ENCODE measurements at regions of chr12 and their contacts with region 1.

Region 1: GRCh38 chr12:46382964-46383653 is 10.5 kb upstream of the SLC38A2 start:
- DNase-seq: peak; percentile 76 to 96 (median 90)
- ATAC-seq: peak; percentile 89
- H3K4me3 ChIP-seq: peak overlapping the region; percentile 61
- H3K4me3 Mint-ChIP-seq: peak overlapping the region; percentile 82 to 95 (median 91)
- H3K27ac ChIP-seq: peak overlapping the region; percentile 94
- H3K27ac Mint-ChIP-seq: peak overlapping the region; percentile 90 to 98 (median 97)
- H3K4me1 ChIP-seq: peaks cover 5 to 25% of the 10 kb centered on the region in 2 donors
- H3K4me1 Mint-ChIP-seq: peaks cover 24 to 53% (median 47%) of the 10 kb centered on the region in 7 donors
- H3K27me3 ChIP-seq: no peaks in the 10 kb centered on the region
- H3K27me3 Mint-ChIP-seq: no peaks in the 10 kb centered on the region

Region 2: GRCh38 chr12:45215419-45216229 is 1167.5 kb before region 1 on chr12 and contains the start of gene ANO6:
- CTCF ChIA-PET with region 1: no interaction called
- POLR2A ChIA-PET with region 1: no interaction called
- intact Hi-C with region 1: loop called (anchors 10 kb)
- DNase-seq: peak; percentile 58 to 85 (median 71)
- ATAC-seq: peak; percentile 86
- H3K4me3 ChIP-seq: peak within 1 kb of the TSS; percentile 83
- H3K4me3 Mint-ChIP-seq: peak within 1 kb of the TSS; percentile 90 to 99 (median 97)
- H3K27ac ChIP-seq: peak within 1 kb of the TSS; percentile 69
- H3K27ac Mint-ChIP-seq: peak within 1 kb of the TSS; percentile 83 to 96 (median 95)
- H3K4me1 ChIP-seq: peaks cover 17% of the 10 kb centered on the region in 2 donors
- H3K4me1 Mint-ChIP-seq: peaks cover 26 to 70% (median 59%) of the 10 kb centered on the region in 7 donors
- H3K27me3 ChIP-seq: no peaks in the 10 kb centered on the region
- H3K27me3 Mint-ChIP-seq: no peaks in the 10 kb centered on the region
- total RNA-seq, gene ANO6: 15.1 to 29.7 (median 25.3) TPM

Region 3: GRCh38 chr12:46364777-46365580 is 18.1 kb before region 1 on chr12:
- CTCF ChIA-PET with region 1: no interaction called
- POLR2A ChIA-PET with region 1: interaction called, 37 read pairs
- intact Hi-C with region 1: no loop called
- DNase-seq: no peak
- ATAC-seq: no peak
- H3K4me3 ChIP-seq: no peak overlapping the region
- H3K4me3 Mint-ChIP-seq: peak overlapping the region in 3 of 10 donors; percentile 27 to 56 (median 45)
- H3K27ac ChIP-seq: peak overlapping the region; percentile 38
- H3K27ac Mint-ChIP-seq: peak overlapping the region in 7 of 9 donors; percentile 34 to 78 (median 61)
- H3K4me1 ChIP-seq: peaks cover 31 to 50% of the 10 kb centered on the region in 2 donors
- H3K4me1 Mint-ChIP-seq: peaks cover 51 to 92% (median 86%) of the 10 kb centered on the region in 7 donors
- H3K27me3 ChIP-seq: no peaks in the 10 kb centered on the region
- H3K27me3 Mint-ChIP-seq: no peaks in the 10 kb centered on the region

Region 4: DNA sequence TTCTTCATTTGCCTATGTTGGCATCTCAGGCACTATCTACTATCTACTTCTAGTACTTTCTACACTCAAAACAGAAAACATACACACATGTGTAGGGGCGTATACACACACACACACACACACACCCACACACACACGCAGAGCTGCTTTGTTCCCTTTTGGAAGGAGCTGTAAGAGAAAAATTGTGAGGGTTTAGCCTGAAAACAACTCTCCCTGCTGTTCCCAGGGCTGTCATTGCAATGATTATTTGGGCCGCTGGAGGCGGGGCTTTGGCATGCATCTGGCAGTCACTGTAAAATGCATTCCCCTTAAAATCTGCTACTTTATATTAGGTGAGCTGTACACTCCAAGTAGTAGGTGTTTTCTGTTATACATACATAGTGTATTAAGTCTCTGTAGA is 18.6 kb after region 1 on chr12:
- CTCF ChIA-PET with region 1: no interaction called
- POLR2A ChIA-PET with region 1: interaction called, 8 read pairs
- intact Hi-C with region 1: loop called (anchors 1 kb)
- DNase-seq: no peak
- ATAC-seq: no peak
- H3K4me3 ChIP-seq: no peak overlapping the region
- H3K4me3 Mint-ChIP-seq: no peak overlapping the region
- H3K27ac ChIP-seq: no peak overlapping the region
- H3K27ac Mint-ChIP-seq: peak overlapping the region in 1 of 9 donors; percentile 32
- H3K4me1 ChIP-seq: peaks cover 0 to 11% of the 10 kb centered on the region in 2 donors
- H3K4me1 Mint-ChIP-seq: peaks cover 28 to 76% (median 67%) of the 10 kb centered on the region in 7 donors
- H3K27me3 ChIP-seq: no peaks in the 10 kb centered on the region
- H3K27me3 Mint-ChIP-seq: no peaks in the 10 kb centered on the region

Region 5: GRCh38 chr12:46459861-46460545 is 76.9 kb after region 1 on chr12:
- CTCF ChIA-PET with region 1: interaction called, 3 read pairs
- POLR2A ChIA-PET with region 1: interaction called, 5 read pairs
- intact Hi-C with region 1: loop called (anchors 1 to 2 kb)
- DNase-seq: peak in 4 of 9 donors; percentile 10 to 38 (median 26)
- ATAC-seq: peak; percentile 63
- H3K4me3 ChIP-seq: peak overlapping the region; percentile 47
- H3K4me3 Mint-ChIP-seq: peak overlapping the region; percentile 74 to 95 (median 88)
- H3K27ac ChIP-seq: peak overlapping the region; percentile 42
- H3K27ac Mint-ChIP-seq: peak overlapping the region; percentile 86 to 99 (median 96)
- H3K4me1 ChIP-seq: peaks cover 26 to 56% of the 10 kb centered on the region in 2 donors
- H3K4me1 Mint-ChIP-seq: peaks cover 45 to 67% (median 61%) of the 10 kb centered on the region in 7 donors
- H3K27me3 ChIP-seq: no peaks in the 10 kb centered on the region
- H3K27me3 Mint-ChIP-seq: no peaks in the 10 kb centered on the region

Measured in naive thymus-derived CD4-positive, alpha-beta T cell (primary cell).